ENCODE measurements at regions of chr6 and their contacts with region 1.

Region 1: GRCh38 chr6:135423649-135424128 is 73.9 kb downstream of the AHI1 start:
- DNase-seq: peak; percentile 29 to 72 (median 46)
- ATAC-seq: peak; percentile 87
- H3K4me3 ChIP-seq: no peak overlapping the region
- H3K27ac ChIP-seq: peak overlapping the region; percentile 39; the same call in 2 of the 3 replicates
- H3K4me1 ChIP-seq: peaks cover 0 to 29% of the 10 kb centered on the region in 2 experiments; a peak in 3 of 5 replicates
- H3K27me3 ChIP-seq: no peaks in the 10 kb centered on the region
- CTCF ChIP-seq: peak; percentile 46 to 85 (median 68); a peak in 5 of 6 replicates
- EP300 ChIP-seq: no peak
- POLR2A ChIP-seq: no peak
- RAD21 ChIP-seq: peak; percentile 87 to 94

Region 2: GRCh38 chr6:135145063-135145800 is 278.5 kb before region 1 on chr6:
- CTCF ChIA-PET with region 1: interaction called, 4 read pairs
- POLR2A ChIA-PET with region 1: no interaction called
- in situ Hi-C with region 1: no loop called
- intact Hi-C with region 1: loop called (anchors 1 kb)
- DNase-seq: peak; percentile 44 to 76 (median 50)
- ATAC-seq: peak; percentile 60
- H3K4me3 ChIP-seq: no peak overlapping the region
- H3K27ac ChIP-seq: peak overlapping the region; percentile 77
- H3K4me1 ChIP-seq: peaks cover 6 to 55% of the 10 kb centered on the region in 2 experiments
- H3K27me3 ChIP-seq: no peaks in the 10 kb centered on the region
- CTCF ChIP-seq: peak; percentile 61 to 85 (median 71); a peak in 5 of 6 replicates
- EP300 ChIP-seq: no peak
- POLR2A ChIP-seq: no peak
- RAD21 ChIP-seq: peak; percentile 86 to 91

Region 3: GRCh38 chr6:135212020-135212806 is 211.5 kb before region 1 on chr6:
- CTCF ChIA-PET with region 1: no interaction called
- POLR2A ChIA-PET with region 1: interaction called, 3 read pairs
- in situ Hi-C with region 1: loop called (anchors 10 kb)
- intact Hi-C with region 1: no loop called
- DNase-seq: no peak
- ATAC-seq: no peak
- H3K4me3 ChIP-seq: no peak overlapping the region
- H3K27ac ChIP-seq: no peak overlapping the region
- H3K4me1 ChIP-seq: no peaks in the 10 kb centered on the region; a peak in 1 of 5 replicates
- H3K27me3 ChIP-seq: no peaks in the 10 kb centered on the region
- CTCF ChIP-seq: no peak
- EP300 ChIP-seq: no peak
- POLR2A ChIP-seq: no peak
- RAD21 ChIP-seq: no peak

Region 4: GRCh38 chr6:135306740-135307420 is 116.8 kb before region 1 on chr6:
- CTCF ChIA-PET with region 1: no interaction called
- POLR2A ChIA-PET with region 1: interaction called, 3 read pairs
- in situ Hi-C with region 1: no loop called
- intact Hi-C with region 1: loop called (anchors 5 kb)
- DNase-seq: peak in 2 of 4 experiments; percentile 57 to 85
- ATAC-seq: peak; percentile 56
- H3K4me3 ChIP-seq: no peak overlapping the region
- H3K27ac ChIP-seq: peak overlapping the region; percentile 57; the same call in 2 of the 3 replicates
- H3K4me1 ChIP-seq: peaks cover 16 to 49% of the 10 kb centered on the region in 2 experiments
- H3K27me3 ChIP-seq: no peaks in the 10 kb centered on the region
- CTCF ChIP-seq: no peak
- EP300 ChIP-seq: peak; percentile 96
- POLR2A ChIP-seq: no peak
- RAD21 ChIP-seq: peak in 1 of 2 experiments; percentile 46; a peak in 3 of 4 replicates

Region 5: GRCh38 chr6:135651964-135652755 is 228.5 kb after region 1 on chr6:
- CTCF ChIA-PET with region 1: no interaction called
- POLR2A ChIA-PET with region 1: no interaction called
- in situ Hi-C with region 1: no loop called
- intact Hi-C with region 1: no loop called
- DNase-seq: no peak
- ATAC-seq: no peak
- H3K4me3 ChIP-seq: no peak overlapping the region
- H3K27ac ChIP-seq: no peak overlapping the region
- H3K4me1 ChIP-seq: no peaks in the 10 kb centered on the region
- H3K27me3 ChIP-seq: no peaks in the 10 kb centered on the region
- CTCF ChIP-seq: no peak
- EP300 ChIP-seq: no peak
- POLR2A ChIP-seq: no peak
- RAD21 ChIP-seq: no peak

Measured in K562 (cell line).